Activated CD4-positive, alpha-beta memory T cell treated with anti-CD3 and anti-CD28 coated beads, Interleukin-2, amount 10 ng/mL, durations not matched to agents 7 days and 5 days (primary cell): ENCODE measurements at regions of chrX and their contacts with region 1.

Region 1: DNA sequence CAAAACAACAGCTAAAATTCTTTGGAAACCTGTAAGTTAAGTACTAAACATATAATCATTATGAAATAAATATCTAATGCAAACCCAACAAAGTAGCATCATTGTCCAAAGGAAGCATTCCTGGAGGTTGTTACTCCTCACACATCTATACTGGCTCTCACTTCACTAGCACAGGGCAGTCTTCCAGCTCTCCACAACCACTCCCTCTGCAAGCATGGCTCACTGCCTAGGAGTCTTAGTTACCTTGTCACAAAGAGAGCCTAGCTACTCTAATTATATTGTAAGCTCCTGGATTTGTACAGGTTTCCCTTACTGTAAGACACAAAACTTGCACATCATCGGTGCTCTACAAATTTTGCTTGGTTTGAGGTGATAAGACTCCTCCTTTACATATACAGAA is 76.1 kb downstream of the AMMECR1 start:
- DNase-seq: no peak
- H3K4me3 Mint-ChIP-seq: no peak overlapping the region
- H3K27ac Mint-ChIP-seq: no peak overlapping the region
- H3K4me1 Mint-ChIP-seq: peaks cover 45% of the 10 kb centered on the region
- H3K27me3 Mint-ChIP-seq: no peaks in the 10 kb centered on the region

Region 2: GRCh38 chrX:110226931-110227330 is 14.9 kb before region 1 on chrX:
- CTCF ChIA-PET with region 1: interaction called, 3 read pairs
- POLR2A ChIA-PET with region 1: interaction called, 18 read pairs
- DNase-seq: no peak
- H3K4me3 Mint-ChIP-seq: no peak overlapping the region
- H3K27ac Mint-ChIP-seq: no peak overlapping the region
- H3K4me1 Mint-ChIP-seq: peaks cover 28% of the 10 kb centered on the region
- H3K27me3 Mint-ChIP-seq: no peaks in the 10 kb centered on the region